GM12878 (cell line): ENCODE measurements at regions of chr13 and their contacts with region 1.

Region 1: GRCh38 chr13:102596147-102597028 is at the start of gene TPP2:
- DNase-seq: peak; percentile 90
- ATAC-seq: peak; percentile 88
- H3K4me3 ChIP-seq: peak within 1 kb of the TSS; percentile 96
- H3K27ac ChIP-seq: peak within 1 kb of the TSS; percentile 99
- H3K4me1 ChIP-seq: no peaks in the 10 kb centered on the region; the same call in 1 of the 2 replicates
- H3K27me3 ChIP-seq: no peaks in the 10 kb centered on the region
- CTCF ChIP-seq: no peak
- EP300 ChIP-seq: peak; percentile 12 to 31; a peak in 1 of 4 replicates
- POLR2A ChIP-seq: peak; percentile 96
- RAD21 ChIP-seq: no peak
- polyA plus RNA-seq, gene TPP2: 18.4 to 25.6 TPM

Region 2: GRCh38 chr13:101875717-101876393 is 720.5 kb before region 1 on chr13:
- CTCF ChIA-PET with region 1: no interaction called
- POLR2A ChIA-PET with region 1: no interaction called
- RAD21 ChIA-PET with region 1: no interaction called
- SMC1A ChIA-PET with region 1: no interaction called
- in situ Hi-C with region 1: no loop called
- intact Hi-C with region 1: no loop called
- DNase-seq: no peak
- ATAC-seq: peak; percentile 28
- H3K4me3 ChIP-seq: no peak overlapping the region
- H3K27ac ChIP-seq: no peak overlapping the region
- H3K4me1 ChIP-seq: no peaks in the 10 kb centered on the region
- H3K27me3 ChIP-seq: no peaks in the 10 kb centered on the region
- CTCF ChIP-seq: no peak
- EP300 ChIP-seq: no peak
- POLR2A ChIP-seq: no peak
- RAD21 ChIP-seq: no peak

Region 3: DNA sequence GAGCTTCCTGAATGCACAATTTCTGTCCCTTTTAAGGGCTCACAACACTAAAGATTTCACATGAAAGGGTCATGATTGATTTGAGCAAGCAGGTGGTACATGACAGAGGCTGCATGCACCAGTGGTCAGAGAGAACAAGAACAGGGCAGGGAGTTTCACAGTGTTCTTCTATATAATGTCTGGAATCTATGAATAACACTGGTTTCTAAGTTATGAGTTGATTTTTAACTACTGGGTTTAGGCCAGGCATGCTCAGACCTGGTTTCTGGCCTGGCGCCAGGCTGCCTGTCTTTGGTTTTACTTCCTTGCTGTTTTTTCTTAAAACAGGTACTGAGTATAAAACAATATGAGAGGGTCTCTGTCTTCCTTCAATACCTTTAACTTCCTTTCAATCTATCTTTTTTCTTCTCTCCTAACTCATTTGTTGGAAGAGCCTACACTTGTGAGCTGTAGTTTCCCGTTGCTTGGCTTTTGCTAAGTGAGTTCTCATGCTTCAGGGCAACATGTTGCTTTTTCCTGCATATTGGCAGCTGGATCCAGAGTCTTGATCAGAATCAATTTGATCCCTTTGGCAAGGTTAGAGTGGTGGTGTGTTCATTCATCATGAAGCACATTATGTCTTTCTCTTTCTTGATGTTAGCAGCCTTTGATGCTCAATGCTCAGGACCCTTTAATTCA is 156.0 kb before region 1 on chr13:
- CTCF ChIA-PET with region 1: no interaction called
- POLR2A ChIA-PET with region 1: no interaction called
- RAD21 ChIA-PET with region 1: no interaction called
- SMC1A ChIA-PET with region 1: no interaction called
- in situ Hi-C with region 1: no loop called
- intact Hi-C with region 1: no loop called
- DNase-seq: peak; percentile 52
- ATAC-seq: peak; percentile 81
- H3K4me3 ChIP-seq: no peak overlapping the region
- H3K27ac ChIP-seq: no peak overlapping the region
- H3K4me1 ChIP-seq: no peaks in the 10 kb centered on the region
- H3K27me3 ChIP-seq: no peaks in the 10 kb centered on the region
- CTCF ChIP-seq: no peak
- EP300 ChIP-seq: no peak
- POLR2A ChIP-seq: no peak
- RAD21 ChIP-seq: no peak

Region 4: DNA sequence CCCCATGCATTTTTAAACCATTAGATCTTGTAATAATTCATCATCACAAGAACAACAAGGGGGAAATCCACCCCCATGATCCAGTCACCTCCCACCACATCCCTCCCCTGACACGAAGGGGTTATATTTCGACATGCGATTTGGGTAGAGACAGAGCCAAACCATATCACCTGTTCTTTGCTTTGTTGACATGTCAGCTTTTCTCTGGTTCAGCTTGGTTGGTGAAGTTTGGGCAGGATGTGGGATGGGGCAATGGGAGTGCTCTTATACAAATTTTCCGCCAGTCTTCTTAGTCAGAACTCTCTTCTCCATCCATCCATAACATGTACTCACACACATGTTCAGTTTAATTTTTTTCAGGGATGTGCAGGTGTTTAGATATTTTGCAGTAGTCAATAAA is 13.3 kb after region 1 on chr13:
- CTCF ChIA-PET with region 1: interaction called, 11 read pairs
- POLR2A ChIA-PET with region 1: interaction called, 7 read pairs
- RAD21 ChIA-PET with region 1: interaction called, 3 read pairs
- SMC1A ChIA-PET with region 1: interaction called, 11 read pairs
- in situ Hi-C with region 1: no loop called
- intact Hi-C with region 1: no loop called
- DNase-seq: no peak
- ATAC-seq: no peak
- H3K4me3 ChIP-seq: no peak overlapping the region
- H3K27ac ChIP-seq: no peak overlapping the region
- H3K4me1 ChIP-seq: no peaks in the 10 kb centered on the region
- H3K27me3 ChIP-seq: no peaks in the 10 kb centered on the region
- CTCF ChIP-seq: no peak
- EP300 ChIP-seq: no peak
- POLR2A ChIP-seq: no peak
- RAD21 ChIP-seq: no peak

Region 5: DNA sequence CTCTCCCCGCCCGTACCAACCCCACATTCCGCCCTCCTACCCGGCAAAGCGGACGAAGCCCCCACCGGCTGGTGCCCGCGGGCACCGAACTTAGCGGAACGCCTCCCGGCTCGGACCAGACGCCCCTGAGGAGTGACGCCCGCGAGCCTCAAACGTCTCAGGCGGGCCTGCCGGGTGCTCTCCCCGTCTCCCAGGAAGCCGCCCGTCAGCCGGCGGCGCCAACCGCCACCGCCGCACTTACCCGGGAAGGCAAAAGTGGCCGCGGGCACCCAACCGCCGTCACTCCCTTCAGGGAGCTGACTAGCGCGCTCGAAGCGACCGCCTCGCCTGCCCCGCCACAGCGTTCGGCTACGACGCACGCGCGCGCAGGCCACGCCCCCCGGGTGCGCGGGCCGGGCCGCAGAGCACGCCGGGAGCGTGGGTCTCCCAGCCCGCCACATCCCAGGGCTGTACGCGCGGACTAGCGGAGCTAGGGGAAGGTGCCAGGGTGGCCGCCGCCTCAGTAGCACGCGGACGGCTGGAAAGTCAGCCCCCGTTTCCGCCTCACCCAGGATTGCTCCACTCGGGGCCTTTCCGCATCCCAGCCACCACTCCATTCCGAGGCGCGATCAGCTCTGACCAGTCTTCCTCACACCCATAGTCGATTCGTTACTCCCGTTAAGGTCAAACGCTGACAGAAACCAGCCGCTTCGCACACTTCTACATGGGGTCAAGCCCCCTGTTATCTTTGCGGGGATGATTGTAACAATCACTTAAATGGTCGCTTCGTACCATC is 177.2 kb after region 1 on chr13 and contains the start of gene TEX30:
- CTCF ChIA-PET with region 1: interaction called, 9 read pairs
- POLR2A ChIA-PET with region 1: interaction called, 6 read pairs
- RAD21 ChIA-PET with region 1: interaction called, 8 read pairs
- SMC1A ChIA-PET with region 1: interaction called, 5 read pairs
- in situ Hi-C with region 1: no loop called
- intact Hi-C with region 1: loop called (anchors 2 kb)
- DNase-seq: peak; percentile 38
- ATAC-seq: peak; percentile 95
- H3K4me3 ChIP-seq: peak within 1 kb of the TSS; percentile 89
- H3K27ac ChIP-seq: peak within 1 kb of the TSS; percentile 73
- H3K4me1 ChIP-seq: peaks cover 11% of the 10 kb centered on the region
- H3K27me3 ChIP-seq: no peaks in the 10 kb centered on the region
- CTCF ChIP-seq: no peak
- EP300 ChIP-seq: no peak
- POLR2A ChIP-seq: peak; percentile 99
- RAD21 ChIP-seq: no peak
- polyA plus RNA-seq, gene TEX30: 79.5 to 114 TPM

Region 6: GRCh38 chr13:102812611-102813287 is 216.4 kb after region 1 on chr13:
- CTCF ChIA-PET with region 1: interaction called, 12 read pairs
- POLR2A ChIA-PET with region 1: no interaction called
- RAD21 ChIA-PET with region 1: no interaction called
- SMC1A ChIA-PET with region 1: interaction called, 4 read pairs
- in situ Hi-C with region 1: no loop called
- intact Hi-C with region 1: no loop called
- DNase-seq: no peak
- ATAC-seq: peak; percentile 79
- H3K4me3 ChIP-seq: no peak overlapping the region
- H3K27ac ChIP-seq: peak overlapping the region; percentile 46; the same call in 1 of the 2 replicates
- H3K4me1 ChIP-seq: peaks cover 15% of the 10 kb centered on the region
- H3K27me3 ChIP-seq: no peaks in the 10 kb centered on the region
- CTCF ChIP-seq: no peak
- EP300 ChIP-seq: no peak
- POLR2A ChIP-seq: no peak
- RAD21 ChIP-seq: no peak

Region 7: DNA sequence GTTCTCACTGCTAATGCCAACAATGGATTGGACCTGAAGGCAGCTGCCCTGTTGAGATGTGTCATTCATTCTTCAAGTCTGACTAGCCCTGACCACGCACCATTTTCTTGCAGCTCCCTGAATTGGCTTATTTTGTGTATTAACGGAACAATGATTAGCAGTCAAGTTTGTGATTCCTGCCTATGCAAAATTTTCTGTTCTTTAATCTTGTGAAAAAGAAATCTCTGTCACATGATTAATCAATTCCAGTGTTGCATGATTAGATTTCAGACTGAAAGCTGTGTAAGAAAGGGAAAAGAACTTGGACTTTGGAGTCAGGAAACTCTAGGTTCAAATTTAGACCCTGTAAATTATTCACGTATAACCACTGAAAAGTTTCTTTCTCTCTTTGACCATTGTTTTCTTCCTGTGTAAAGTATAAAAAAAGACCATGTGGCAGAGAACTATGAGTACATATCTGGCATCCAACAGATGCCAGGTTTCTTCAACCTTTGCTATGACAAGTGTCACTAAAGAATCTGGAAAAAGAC is 534.4 kb after region 1 on chr13:
- CTCF ChIA-PET with region 1: no interaction called
- POLR2A ChIA-PET with region 1: no interaction called
- RAD21 ChIA-PET with region 1: no interaction called
- SMC1A ChIA-PET with region 1: no interaction called
- in situ Hi-C with region 1: loop called (anchors 25 kb)
- intact Hi-C with region 1: loop called (anchors 10 kb)
- DNase-seq: peak; percentile 71
- ATAC-seq: peak; percentile 89
- H3K4me3 ChIP-seq: 0 out of 2 replicates have a peak overlapping the region, but pooled peaks have one; percentile 6
- H3K27ac ChIP-seq: peak overlapping the region; percentile 55
- H3K4me1 ChIP-seq: peaks cover 17% of the 10 kb centered on the region
- H3K27me3 ChIP-seq: no peaks in the 10 kb centered on the region
- CTCF ChIP-seq: no peak
- EP300 ChIP-seq: peak; percentile 66 to 78; a peak in 1 of 4 replicates
- POLR2A ChIP-seq: no peak
- RAD21 ChIP-seq: no peak